HEK293 (cell line): ENCODE measurements at regions of chr7 and their contacts with region 1.

Region 1: GRCh38 chr7:25565949-25566348 is 337.7 kb upstream of the NPVF start:
- H3K4me3 ChIP-seq: no peak overlapping the region
- H3K27ac ChIP-seq: no peak overlapping the region
- H3K4me1 ChIP-seq: no peaks in the 10 kb centered on the region
- CTCF ChIP-seq: peak; percentile 92

Region 2: DNA sequence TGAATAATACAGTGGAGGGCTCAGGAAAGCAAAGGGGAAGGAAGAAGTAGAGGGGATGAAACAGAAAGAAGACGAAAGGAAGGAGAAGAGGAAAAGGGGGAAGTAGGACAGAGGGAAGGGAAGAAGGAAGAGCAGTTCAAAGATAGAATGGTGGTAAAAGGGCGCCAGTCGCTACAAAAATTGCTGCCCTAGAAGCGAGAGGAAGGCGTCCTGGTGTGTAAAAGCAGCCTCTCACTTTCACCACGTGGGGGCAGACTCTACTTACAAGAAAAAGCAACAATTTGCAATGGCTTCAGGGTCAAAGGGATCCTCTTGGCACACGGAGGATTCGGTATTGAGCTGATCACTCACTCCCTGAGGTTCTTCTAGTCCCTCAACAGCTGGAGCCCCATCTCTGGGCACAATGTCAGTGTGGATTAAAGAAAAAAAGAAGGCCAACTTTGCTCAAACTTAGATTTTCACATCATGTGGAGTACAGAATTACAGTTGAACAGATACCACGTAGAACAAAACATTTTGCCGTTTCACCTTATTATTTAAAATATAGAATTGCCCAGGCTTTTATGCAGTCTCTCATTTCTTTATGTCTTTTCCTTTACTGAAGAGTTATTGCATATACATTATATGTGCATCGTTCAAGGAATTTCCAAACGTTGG is 306.2 kb before region 1 on chr7:
- CTCF ChIA-PET with region 1: interaction called, 107 read pairs
- POLR2A ChIA-PET with region 1: no interaction called
- H3K4me3 ChIP-seq: no peak overlapping the region
- H3K27ac ChIP-seq: no peak overlapping the region
- H3K4me1 ChIP-seq: peaks cover 11% of the 10 kb centered on the region; the same call in 1 of the 2 replicates
- CTCF ChIP-seq: peak; percentile 73

Region 3: GRCh38 chr7:25389489-25390106 is 176.4 kb before region 1 on chr7:
- CTCF ChIA-PET with region 1: interaction called, 280 read pairs
- POLR2A ChIA-PET with region 1: no interaction called
- H3K4me3 ChIP-seq: no peak overlapping the region
- H3K27ac ChIP-seq: no peak overlapping the region
- H3K4me1 ChIP-seq: peaks cover 2% of the 10 kb centered on the region; the same call in 1 of the 2 replicates
- CTCF ChIP-seq: peak; percentile 28; the same call in 1 of the 2 replicates

Region 4: DNA sequence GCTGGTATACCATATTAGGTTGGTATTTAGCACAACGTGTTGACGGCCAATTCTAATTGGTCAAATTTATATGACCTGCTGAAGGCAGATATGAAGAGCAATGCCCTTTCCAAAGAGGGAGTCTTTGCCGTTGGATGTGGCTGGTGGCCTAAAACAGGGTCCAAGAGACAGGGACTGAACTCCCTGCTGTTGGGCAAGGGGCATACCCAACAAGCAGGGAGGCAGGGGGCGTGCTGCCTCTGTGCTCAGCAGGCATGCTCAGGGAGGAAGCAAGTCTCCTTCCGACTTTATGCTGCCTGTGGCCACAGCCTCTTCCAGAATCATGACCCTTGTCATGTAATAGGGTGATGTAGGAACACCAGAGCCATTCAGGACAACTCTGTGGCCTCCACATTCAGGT is 170.0 kb before region 1 on chr7:
- CTCF ChIA-PET with region 1: interaction called, 280 read pairs
- POLR2A ChIA-PET with region 1: no interaction called
- H3K4me3 ChIP-seq: no peak overlapping the region
- H3K27ac ChIP-seq: no peak overlapping the region
- H3K4me1 ChIP-seq: peaks cover 2% of the 10 kb centered on the region; the same call in 1 of the 2 replicates
- CTCF ChIP-seq: no peak

Region 5: DNA sequence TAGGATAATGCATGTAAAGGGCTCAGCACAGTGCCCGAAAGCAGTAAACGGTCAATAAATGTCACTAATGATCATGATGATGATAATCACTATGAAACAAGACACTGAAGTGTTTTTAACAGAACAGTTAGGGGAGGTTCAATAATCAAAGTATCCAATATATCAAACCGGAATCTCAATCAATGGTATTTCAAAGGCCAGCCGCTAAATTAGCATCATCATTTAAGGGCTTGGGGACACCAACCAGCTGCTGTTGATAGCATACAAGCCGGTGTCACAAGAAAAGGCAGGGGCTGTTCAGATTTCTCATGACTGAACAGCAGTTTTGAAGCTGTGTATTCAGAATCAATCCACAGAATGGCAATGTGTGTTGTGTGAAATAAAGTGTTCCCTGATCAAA is 21.7 kb before region 1 on chr7:
- CTCF ChIA-PET with region 1: interaction called, 10 read pairs
- POLR2A ChIA-PET with region 1: no interaction called
- H3K4me3 ChIP-seq: no peak overlapping the region
- H3K27ac ChIP-seq: no peak overlapping the region
- H3K4me1 ChIP-seq: 0 out of 2 replicates have a peak, but pooled peaks cover 4% of the 10 kb centered on the region
- CTCF ChIP-seq: no peak

Region 6: GRCh38 chr7:25578991-25579777 is 13.2 kb after region 1 on chr7:
- CTCF ChIA-PET with region 1: interaction called, 11 read pairs
- POLR2A ChIA-PET with region 1: no interaction called
- H3K4me3 ChIP-seq: no peak overlapping the region
- H3K27ac ChIP-seq: no peak overlapping the region
- H3K4me1 ChIP-seq: no peaks in the 10 kb centered on the region
- CTCF ChIP-seq: no peak

Region 7: GRCh38 chr7:25663877-25664276 is 97.9 kb after region 1 on chr7:
- CTCF ChIA-PET with region 1: no interaction called
- POLR2A ChIA-PET with region 1: no interaction called
- H3K4me3 ChIP-seq: no peak overlapping the region
- H3K27ac ChIP-seq: no peak overlapping the region
- H3K4me1 ChIP-seq: peaks cover 2% of the 10 kb centered on the region; the same call in 1 of the 2 replicates
- CTCF ChIP-seq: no peak

Region 8: GRCh38 chr7:25851332-25852210 is 285.6 kb after region 1 on chr7:
- CTCF ChIA-PET with region 1: interaction called, 103 read pairs
- POLR2A ChIA-PET with region 1: interaction called, 3 read pairs
- H3K4me3 ChIP-seq: no peak overlapping the region
- H3K27ac ChIP-seq: no peak overlapping the region
- H3K4me1 ChIP-seq: peaks cover 16% of the 10 kb centered on the region
- CTCF ChIP-seq: peak; percentile 65

Region 9: DNA sequence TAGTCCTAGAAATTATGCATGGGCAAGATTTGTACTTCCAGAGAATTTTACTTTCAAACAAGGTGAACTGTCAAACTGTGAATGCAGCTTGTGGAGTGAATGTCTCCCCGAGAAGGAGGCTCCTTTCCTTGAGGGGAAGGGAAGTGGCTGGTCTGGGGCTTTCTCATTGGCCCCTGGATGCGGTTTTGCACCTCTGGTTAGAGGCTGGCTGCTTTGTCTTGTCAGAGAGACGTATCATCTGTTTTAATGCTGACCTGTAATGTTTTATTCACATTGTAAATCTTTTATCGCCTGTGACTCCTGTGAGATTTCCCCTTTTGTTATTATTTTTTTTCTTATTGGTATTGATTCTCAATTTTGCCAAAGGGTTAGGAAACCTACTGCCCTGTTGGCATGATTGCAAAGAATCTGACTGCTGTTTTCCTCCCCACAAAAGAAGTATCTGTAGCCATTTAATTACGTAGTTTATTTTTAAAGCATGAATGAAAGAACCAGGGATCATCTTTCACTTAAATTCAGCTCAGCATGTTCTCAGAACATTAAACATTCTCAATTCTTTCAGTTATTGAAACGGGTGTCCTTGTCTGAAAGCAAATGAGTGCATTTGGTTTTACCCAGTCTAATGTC is 347.8 kb after region 1 on chr7:
- CTCF ChIA-PET with region 1: no interaction called
- POLR2A ChIA-PET with region 1: no interaction called
- H3K4me3 ChIP-seq: no peak overlapping the region
- H3K27ac ChIP-seq: no peak overlapping the region
- H3K4me1 ChIP-seq: peaks cover 11% of the 10 kb centered on the region
- CTCF ChIP-seq: no peak